HEK293 (cell line): ENCODE measurements at regions of chr10 and their contacts with region 1.

Region 1: GRCh38 chr10:101050208-101051069 is 11.3 kb upstream of the KAZALD1 start:
- H3K4me3 ChIP-seq: no peak overlapping the region; the same call in 1 of the 2 replicates
- H3K27ac ChIP-seq: no peak overlapping the region
- H3K4me1 ChIP-seq: peaks cover 8% of the 10 kb centered on the region
- CTCF ChIP-seq: peak; percentile 94

Region 2: DNA sequence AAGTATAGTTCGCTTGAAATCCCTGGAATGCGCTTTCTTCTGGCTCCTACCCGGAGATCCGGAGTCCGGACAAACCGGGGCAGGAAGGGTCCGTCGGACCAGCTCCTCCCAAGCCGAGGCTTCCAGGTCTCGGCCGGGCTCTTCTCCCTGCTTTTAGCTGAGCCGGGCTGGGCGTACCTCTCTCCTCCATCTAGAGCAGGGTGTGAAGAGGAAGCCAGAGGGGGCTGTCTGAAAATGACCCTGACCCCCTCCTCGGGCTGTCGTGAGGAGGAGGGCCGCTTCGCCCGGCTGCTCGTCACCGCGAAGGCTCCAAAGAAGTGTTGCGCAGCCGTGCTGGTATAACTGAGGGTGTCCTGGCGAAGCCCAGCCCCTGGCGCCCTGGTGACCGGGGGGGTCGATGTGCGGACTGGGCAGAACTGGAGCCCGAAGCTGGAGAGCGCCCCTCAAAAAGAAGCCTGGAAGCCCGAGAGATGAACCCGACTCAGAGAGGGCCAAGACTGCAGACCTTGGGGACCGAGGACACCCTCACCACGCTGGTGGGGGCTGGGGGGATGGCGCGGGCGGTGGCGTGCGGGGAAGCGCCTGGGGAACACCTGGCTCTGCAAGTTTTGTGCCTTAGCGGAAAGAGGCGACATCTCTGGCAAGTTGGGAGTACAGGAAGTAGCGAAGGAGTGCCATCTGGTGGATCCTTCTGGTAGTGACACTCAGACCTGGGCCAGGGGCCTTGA is 17.1 kb after region 1 on chr10:
- CTCF ChIA-PET with region 1: interaction called, 61 read pairs
- POLR2A ChIA-PET with region 1: interaction called, 5 read pairs
- H3K4me3 ChIP-seq: peak overlapping the region; percentile 49
- H3K27ac ChIP-seq: peak overlapping the region; percentile 66
- H3K4me1 ChIP-seq: peaks cover 15% of the 10 kb centered on the region
- CTCF ChIP-seq: peak; percentile 91

Region 3: DNA sequence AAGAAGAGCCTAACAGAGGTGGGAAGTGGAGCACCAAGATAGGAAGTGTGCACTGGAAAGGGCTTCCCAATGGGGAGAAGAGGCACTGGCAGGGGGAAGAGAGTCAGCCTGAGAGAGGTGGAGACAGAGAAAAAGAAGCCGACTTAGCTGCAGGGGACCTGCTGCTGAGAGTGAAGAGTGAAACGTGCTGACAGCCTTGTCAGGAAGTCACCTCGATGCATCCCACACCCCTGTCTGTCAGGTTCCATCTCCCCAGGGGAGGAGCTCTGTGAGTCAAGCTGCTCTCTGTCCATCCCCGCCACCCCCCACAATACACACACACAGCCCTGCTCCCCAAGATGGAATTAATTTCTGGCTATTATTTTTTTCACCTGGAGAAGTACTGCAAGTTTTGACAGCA is 25.3 kb after region 1 on chr10:
- CTCF ChIA-PET with region 1: interaction called, 10 read pairs
- POLR2A ChIA-PET with region 1: no interaction called
- H3K4me3 ChIP-seq: no peak overlapping the region
- H3K27ac ChIP-seq: no peak overlapping the region
- H3K4me1 ChIP-seq: no peaks in the 10 kb centered on the region
- CTCF ChIP-seq: no peak

Region 4: DNA sequence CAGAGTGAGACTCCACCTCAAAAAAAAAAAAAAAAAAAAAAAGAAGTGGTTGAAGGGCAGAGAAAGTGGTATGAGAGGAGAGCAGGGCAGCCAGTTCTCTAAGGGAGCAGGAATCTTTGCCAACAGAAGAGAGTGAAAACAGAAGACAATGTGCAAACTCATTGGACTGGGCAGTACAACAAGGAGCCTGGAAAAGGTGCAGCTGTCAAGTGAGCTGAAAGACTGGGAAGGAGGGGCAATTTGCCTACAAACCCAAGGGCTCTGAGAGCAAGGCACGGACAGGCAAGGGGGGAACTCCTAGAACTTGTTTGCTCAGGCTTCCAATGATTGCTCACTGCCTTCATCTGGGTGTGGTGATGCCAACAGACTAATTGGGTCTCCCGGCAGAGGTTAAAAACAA is 1442.5 kb after region 1 on chr10:
- CTCF ChIA-PET with region 1: no interaction called
- POLR2A ChIA-PET with region 1: no interaction called
- H3K4me3 ChIP-seq: no peak overlapping the region
- H3K27ac ChIP-seq: no peak overlapping the region
- H3K4me1 ChIP-seq: peaks cover 2% of the 10 kb centered on the region; the same call in 1 of the 2 replicates
- CTCF ChIP-seq: no peak